HCT116 (cell line): ENCODE measurements at regions of chr6 and their contacts with region 1.

Region 1: GRCh38 chr6:37018198-37019064 is 13.0 kb downstream of the FGD2 start:
- DNase-seq: peak; percentile 75
- ATAC-seq: peak; percentile 93
- H3K4me3 ChIP-seq: no peak overlapping the region
- H3K27ac ChIP-seq: peak overlapping the region; percentile 3; the same call in 1 of the 2 replicates
- H3K4me1 ChIP-seq: peaks cover 16 to 41% of the 10 kb centered on the region in 2 experiments
- H3K27me3 ChIP-seq: no peaks in the 10 kb centered on the region
- CTCF ChIP-seq: peak in 2 of 3 experiments; percentile 73 to 96; a peak in 4 of 6 replicates
- POLR2A ChIP-seq: no peak
- RAD21 ChIP-seq: no peak

Region 2: DNA sequence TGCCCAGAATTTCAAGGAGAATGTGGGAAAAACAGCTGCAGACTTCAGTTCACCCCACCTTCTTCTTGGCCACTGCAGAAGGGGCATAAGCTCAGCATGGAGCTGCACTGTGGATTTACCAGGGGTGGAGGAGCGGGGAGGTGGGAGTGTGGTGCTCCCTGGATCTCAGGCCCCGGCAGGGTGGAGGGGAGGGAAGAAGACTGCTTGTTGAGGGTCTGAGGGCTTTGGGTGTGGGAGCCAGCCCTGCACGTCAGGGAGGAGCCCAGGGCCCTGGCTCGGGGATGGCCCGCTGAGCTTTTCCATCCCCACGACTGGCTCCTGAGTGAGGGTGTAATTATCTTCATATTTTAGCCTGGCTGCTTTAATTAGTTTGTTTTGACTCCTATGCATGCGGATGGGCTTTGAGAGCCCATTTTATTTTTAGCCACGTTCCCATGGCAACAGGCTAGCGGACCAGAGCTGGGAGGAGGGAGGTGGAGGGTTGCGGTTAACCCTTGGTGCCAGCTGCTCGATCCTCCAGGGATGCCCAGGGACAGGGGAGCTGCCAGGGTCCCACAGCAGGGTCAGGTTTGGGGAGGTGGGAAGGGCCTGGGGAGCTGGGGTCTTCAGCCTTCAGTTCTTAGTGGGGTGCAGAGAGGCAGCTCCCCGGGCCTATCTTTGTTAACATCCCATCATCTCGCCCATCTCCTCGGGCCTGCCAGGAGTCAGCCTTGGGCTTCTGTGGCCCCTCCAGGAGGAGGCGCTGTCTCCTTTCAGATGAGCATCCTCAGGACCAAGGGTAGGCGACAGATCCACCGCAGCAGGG is 252.6 kb before region 1 on chr6:
- CTCF ChIA-PET with region 1: interaction called, 71 read pairs
- POLR2A ChIA-PET with region 1: interaction called, 6 read pairs
- RAD21 ChIA-PET with region 1: interaction called, 11 to 18 read pairs
- intact Hi-C with region 1: loop called (anchors 1 kb)
- DNase-seq: peak; percentile 67
- ATAC-seq: peak; percentile 98
- H3K4me3 ChIP-seq: no peak overlapping the region
- H3K27ac ChIP-seq: no peak overlapping the region
- H3K4me1 ChIP-seq: peaks cover 0 to 10% of the 10 kb centered on the region in 2 experiments; a peak in 2 of 4 replicates
- H3K27me3 ChIP-seq: no peaks in the 10 kb centered on the region
- CTCF ChIP-seq: peak; percentile 95 to 97 (median 96)
- POLR2A ChIP-seq: no peak
- RAD21 ChIP-seq: peak; percentile 97

Region 3: DNA sequence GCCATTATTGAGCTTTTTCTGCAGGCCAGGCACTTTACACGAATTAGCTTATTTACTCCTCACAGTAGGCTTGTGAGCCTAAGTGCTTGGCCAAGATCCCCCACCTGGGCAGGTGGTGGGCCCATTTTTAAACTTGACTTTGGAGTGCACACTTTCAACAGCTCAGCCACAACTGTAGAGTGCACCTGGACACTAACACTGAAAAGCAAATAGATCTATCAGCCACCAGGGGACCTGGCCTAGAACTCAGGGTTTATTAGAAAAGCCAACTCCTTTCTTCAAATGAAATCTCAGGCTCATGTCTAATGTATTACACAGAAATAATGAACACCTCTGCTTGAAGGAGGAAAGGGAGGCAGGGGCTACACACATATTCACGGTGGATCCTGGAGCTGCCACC is 207.0 kb before region 1 on chr6:
- CTCF ChIA-PET with region 1: no interaction called
- POLR2A ChIA-PET with region 1: no interaction called
- RAD21 ChIA-PET with region 1: no interaction called
- intact Hi-C with region 1: no loop called
- DNase-seq: no peak
- ATAC-seq: no peak
- H3K4me3 ChIP-seq: no peak overlapping the region
- H3K27ac ChIP-seq: no peak overlapping the region
- H3K4me1 ChIP-seq: no peaks in the 10 kb centered on the region
- H3K27me3 ChIP-seq: no peaks in the 10 kb centered on the region
- CTCF ChIP-seq: 0 out of 6 replicates have a peak, but pooled peaks of 1 of the 3 experiments have one; percentile 13
- POLR2A ChIP-seq: no peak
- RAD21 ChIP-seq: no peak

Region 4: DNA sequence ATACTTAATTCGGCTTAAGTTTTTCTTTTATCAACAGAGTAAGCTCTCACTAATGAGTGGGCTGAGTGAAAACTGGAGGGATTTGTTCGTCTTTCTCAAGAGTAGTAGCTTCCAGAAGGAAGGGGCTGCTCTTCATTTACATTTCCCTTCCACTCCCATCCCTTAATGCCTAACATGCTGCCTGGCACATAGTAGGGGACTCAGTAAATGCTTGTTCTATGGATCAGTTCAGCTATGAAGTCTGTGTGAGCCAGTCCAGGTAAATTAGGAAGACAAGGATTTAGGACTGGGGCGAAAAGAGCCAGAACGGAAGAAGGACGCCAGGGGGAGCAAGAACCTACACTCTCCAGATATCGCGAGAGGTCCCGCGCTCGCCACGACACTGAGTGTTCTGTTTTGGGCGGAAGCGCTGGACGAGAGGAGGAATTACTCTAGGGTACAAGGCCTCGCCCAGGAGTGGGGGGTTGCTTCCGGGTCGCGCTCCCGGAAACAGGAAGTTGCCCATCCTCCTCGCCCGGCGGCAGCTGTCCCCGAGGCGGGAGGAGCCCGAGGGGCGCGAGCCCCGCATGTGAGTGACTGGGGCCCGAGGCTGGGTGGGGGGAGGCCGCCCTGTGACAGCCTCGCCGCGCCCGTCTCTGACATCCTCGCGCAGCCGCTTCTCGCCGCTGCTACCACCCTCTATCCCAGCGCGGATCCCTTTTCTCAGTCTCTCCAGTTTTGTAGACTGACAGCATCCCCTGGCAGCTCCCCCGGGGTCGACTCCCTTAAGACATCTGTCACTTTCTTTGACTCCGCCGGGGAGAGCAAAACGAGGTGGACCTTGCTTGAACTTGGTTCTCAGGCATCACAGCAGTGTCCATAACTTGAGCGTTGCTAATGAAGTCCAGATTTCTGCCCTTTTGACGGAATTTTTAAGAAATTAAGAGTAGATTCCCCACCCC is 132.7 kb before region 1 on chr6 and contains the start of gene C6orf89:
- CTCF ChIA-PET with region 1: interaction called, 39 read pairs
- POLR2A ChIA-PET with region 1: interaction called, 3 read pairs
- RAD21 ChIA-PET with region 1: interaction called, 4 to 6 read pairs
- intact Hi-C with region 1: loop called (anchors 1 kb)
- DNase-seq: peak; percentile 94
- ATAC-seq: peak; percentile 100
- H3K4me3 ChIP-seq: peak within 1 kb of the TSS; percentile 81 to 88
- H3K27ac ChIP-seq: peak within 1 kb of the TSS; percentile 65
- H3K4me1 ChIP-seq: peaks cover 8 to 18% of the 10 kb centered on the region in 2 experiments; a peak in 3 of 4 replicates
- H3K27me3 ChIP-seq: no peaks in the 10 kb centered on the region
- CTCF ChIP-seq: peak; percentile 80 to 87 (median 87)
- POLR2A ChIP-seq: no peak
- RAD21 ChIP-seq: peak; percentile 73
- total RNA-seq, gene C6orf89: 32.9 TPM

Region 5: DNA sequence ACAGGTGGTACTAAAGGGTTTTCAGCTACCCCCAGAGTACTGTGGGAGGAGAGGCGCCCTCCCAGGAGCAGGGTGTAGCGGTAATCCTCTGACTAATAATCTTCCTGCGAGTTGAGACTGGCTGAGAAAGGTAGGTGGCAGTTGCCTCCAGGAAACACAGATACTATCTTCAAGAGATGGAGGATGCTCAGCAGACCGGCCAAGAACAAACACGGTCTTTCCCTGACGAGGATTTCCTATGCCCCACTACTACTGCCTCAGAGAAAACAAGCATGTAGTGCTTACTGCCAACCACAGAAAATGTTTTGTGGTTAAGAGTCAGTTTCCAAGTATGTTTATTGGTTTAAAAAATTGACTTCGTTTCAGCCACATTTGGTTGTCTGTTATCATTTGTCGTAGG is 105.8 kb before region 1 on chr6:
- CTCF ChIA-PET with region 1: interaction called, 9 read pairs
- POLR2A ChIA-PET with region 1: no interaction called
- RAD21 ChIA-PET with region 1: interaction called in 1 of 2 experiments, 4 read pairs
- intact Hi-C with region 1: loop called (anchors 1 kb)
- DNase-seq: no peak
- ATAC-seq: peak; percentile 21; the same call in 1 of the 2 replicates
- H3K4me3 ChIP-seq: no peak overlapping the region
- H3K27ac ChIP-seq: no peak overlapping the region
- H3K4me1 ChIP-seq: peaks cover 24 to 47% of the 10 kb centered on the region in 2 experiments
- H3K27me3 ChIP-seq: no peaks in the 10 kb centered on the region
- CTCF ChIP-seq: no peak
- POLR2A ChIP-seq: no peak
- RAD21 ChIP-seq: peak; percentile 27; the same call in 1 of the 2 replicates

Region 6: GRCh38 chr6:37051138-37052026 is 33.0 kb after region 1 on chr6:
- CTCF ChIA-PET with region 1: interaction called, 9 read pairs
- POLR2A ChIA-PET with region 1: no interaction called
- RAD21 ChIA-PET with region 1: no interaction called
- intact Hi-C with region 1: loop called (anchors 1 kb)
- DNase-seq: peak; percentile 44
- ATAC-seq: peak; percentile 89
- H3K4me3 ChIP-seq: no peak overlapping the region
- H3K27ac ChIP-seq: no peak overlapping the region
- H3K4me1 ChIP-seq: peaks cover 8 to 38% of the 10 kb centered on the region in 2 experiments
- H3K27me3 ChIP-seq: no peaks in the 10 kb centered on the region
- CTCF ChIP-seq: peak in 2 of 3 experiments; percentile 90 to 91; a peak in 4 of 6 replicates
- POLR2A ChIP-seq: no peak
- RAD21 ChIP-seq: no peak

Region 7: DNA sequence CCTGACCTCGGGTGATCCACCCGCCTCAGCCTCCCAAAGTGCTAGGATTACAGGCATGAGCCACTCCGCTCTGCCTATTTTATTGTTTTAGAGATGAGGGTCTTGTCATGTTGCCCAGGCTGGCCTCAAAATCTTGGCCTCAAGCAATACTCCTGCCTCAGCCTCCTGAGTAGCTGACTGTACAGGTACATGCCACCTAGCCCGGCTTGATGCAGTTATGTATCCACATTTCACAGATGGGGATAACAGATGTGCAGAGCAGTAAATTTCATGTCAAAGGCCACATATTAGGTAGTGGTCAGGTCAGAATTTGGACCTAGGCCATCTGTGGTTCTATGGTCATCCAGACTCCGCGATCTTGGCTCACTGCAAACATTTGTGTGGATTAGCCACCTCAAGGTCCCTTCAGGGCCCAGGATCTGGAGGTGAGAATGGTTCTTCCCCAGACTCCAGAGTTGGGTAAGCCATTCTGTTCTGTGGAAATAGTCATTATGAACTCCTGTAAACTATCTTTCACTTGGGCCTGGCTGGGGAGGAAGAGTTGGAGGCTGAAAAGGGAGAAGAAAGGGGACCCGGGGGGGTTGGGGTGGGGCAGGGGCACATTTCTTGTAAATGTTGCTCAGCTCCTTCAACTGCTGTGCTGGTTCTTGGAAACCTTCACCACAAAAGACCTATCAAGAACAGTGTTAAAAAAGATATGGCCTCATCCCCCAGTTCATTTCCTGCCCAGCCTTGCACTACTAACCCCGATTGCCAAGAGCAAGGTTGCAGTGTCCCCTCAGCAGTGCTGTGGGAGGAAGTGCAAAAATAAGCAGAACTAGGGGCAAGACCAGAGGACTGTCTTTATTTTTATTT is 164.5 kb after region 1 on chr6:
- CTCF ChIA-PET with region 1: no interaction called
- POLR2A ChIA-PET with region 1: no interaction called
- RAD21 ChIA-PET with region 1: no interaction called
- intact Hi-C with region 1: no loop called
- DNase-seq: no peak
- ATAC-seq: no peak
- H3K4me3 ChIP-seq: no peak overlapping the region
- H3K27ac ChIP-seq: no peak overlapping the region
- H3K4me1 ChIP-seq: no peaks in the 10 kb centered on the region
- H3K27me3 ChIP-seq: no peaks in the 10 kb centered on the region
- CTCF ChIP-seq: no peak
- POLR2A ChIP-seq: no peak
- RAD21 ChIP-seq: no peak

Region 8: GRCh38 chr6:37207903-37208456 is 189.5 kb after region 1 on chr6:
- CTCF ChIA-PET with region 1: interaction called, 331 read pairs
- POLR2A ChIA-PET with region 1: interaction called, 7 read pairs
- RAD21 ChIA-PET with region 1: interaction called, 11 to 16 read pairs
- intact Hi-C with region 1: loop called (anchors 1 kb)
- DNase-seq: peak; percentile 77
- ATAC-seq: peak; percentile 94
- H3K4me3 ChIP-seq: no peak overlapping the region
- H3K27ac ChIP-seq: no peak overlapping the region
- H3K4me1 ChIP-seq: peaks cover 13 to 36% of the 10 kb centered on the region in 2 experiments
- H3K27me3 ChIP-seq: no peaks in the 10 kb centered on the region
- CTCF ChIP-seq: peak; percentile 92 to 95 (median 94)
- POLR2A ChIP-seq: no peak
- RAD21 ChIP-seq: peak; percentile 77